Sigmoid colon (tissue), 7 donors: ENCODE measurements at regions of chr10 and their contacts with region 1.

Region 1: GRCh38 chr10:94320285-94320914 is 42.3 kb downstream of the NOC3L start:
- DNase-seq: peak; percentile 75
- H3K4me3 ChIP-seq: no peak overlapping the region
- H3K27ac ChIP-seq: no peak overlapping the region
- H3K4me1 ChIP-seq: peaks cover 0 to 15% (median 13%) of the 10 kb centered on the region in 4 donors
- H3K27me3 ChIP-seq: no peaks in the 10 kb centered on the region
- CTCF ChIP-seq: peak; percentile 58 to 85 (median 76)
- EP300 ChIP-seq: no peak
- POLR2A ChIP-seq: no peak

Region 2: GRCh38 chr10:93916257-93917063 is 403.9 kb before region 1 on chr10:
- intact Hi-C with region 1: loop called (anchors 1 kb)
- DNase-seq: no peak
- H3K4me3 ChIP-seq: peak overlapping the region in 1 of 4 donors; percentile 8
- H3K27ac ChIP-seq: no peak overlapping the region
- H3K4me1 ChIP-seq: peaks cover 0 to 13% (median 3%) of the 10 kb centered on the region in 4 donors
- H3K27me3 ChIP-seq: no peaks in the 10 kb centered on the region
- CTCF ChIP-seq: peak; percentile 29 to 51 (median 44)
- EP300 ChIP-seq: no peak
- POLR2A ChIP-seq: no peak